Dendritic cell treated with granulocyte-macrophage colony-stimulating factor and Interleukin-4, amounts not matched to agents 40 ng/mL and 50 ng/mL, for 4 days (primary cell): ENCODE measurements at regions of chr4 and their contacts with region 1.

Region 1: GRCh38 chr4:70749313-70749712 is 27.5 kb downstream of the RUFY3 start:
- H3K4me3 Mint-ChIP-seq: no peak overlapping the region
- H3K27ac Mint-ChIP-seq: no peak overlapping the region
- H3K4me1 Mint-ChIP-seq: peaks cover 39% of the 10 kb centered on the region
- H3K27me3 Mint-ChIP-seq: no peaks in the 10 kb centered on the region

Region 2: GRCh38 chr4:70714079-70714887 is 35.0 kb before region 1 on chr4:
- intact Hi-C with region 1: loop called (anchors 5 kb)
- H3K4me3 Mint-ChIP-seq: no peak overlapping the region
- H3K27ac Mint-ChIP-seq: peak overlapping the region; percentile 84
- H3K4me1 Mint-ChIP-seq: peaks cover 55% of the 10 kb centered on the region
- H3K27me3 Mint-ChIP-seq: no peaks in the 10 kb centered on the region

Region 3: DNA sequence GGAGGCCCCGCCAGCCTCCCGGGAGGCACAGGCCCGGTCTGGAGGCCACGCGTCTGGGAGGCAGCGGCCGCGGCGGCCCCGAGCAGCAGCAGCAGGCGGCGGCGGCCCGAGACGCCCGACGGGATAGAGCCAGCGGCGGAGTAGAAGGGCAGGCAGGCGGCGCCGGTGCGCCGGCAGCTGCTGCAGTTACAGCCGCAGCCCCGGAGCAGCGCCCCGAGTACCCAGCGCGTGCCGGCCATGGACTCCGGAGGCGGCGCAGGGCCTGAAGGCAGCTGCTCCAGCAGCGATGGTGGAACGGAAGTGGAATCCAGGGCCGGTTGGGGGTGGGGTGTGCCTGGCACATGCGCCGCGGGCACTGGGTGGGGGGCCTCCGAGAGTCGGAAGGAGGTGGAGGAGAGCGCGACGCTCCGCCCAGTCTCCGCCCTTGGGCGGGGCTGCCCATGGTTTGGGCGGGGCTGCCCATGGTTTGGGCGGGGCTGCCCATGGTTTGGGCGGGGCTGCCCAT is 90.3 kb after region 1 on chr4 and contains the start of gene GRSF1:
- intact Hi-C with region 1: no loop called
- H3K4me3 Mint-ChIP-seq: peak within 1 kb of the TSS; percentile 87
- H3K27ac Mint-ChIP-seq: peak within 1 kb of the TSS; percentile 94
- H3K4me1 Mint-ChIP-seq: peaks cover 15% of the 10 kb centered on the region
- H3K27me3 Mint-ChIP-seq: no peaks in the 10 kb centered on the region

Region 4: DNA sequence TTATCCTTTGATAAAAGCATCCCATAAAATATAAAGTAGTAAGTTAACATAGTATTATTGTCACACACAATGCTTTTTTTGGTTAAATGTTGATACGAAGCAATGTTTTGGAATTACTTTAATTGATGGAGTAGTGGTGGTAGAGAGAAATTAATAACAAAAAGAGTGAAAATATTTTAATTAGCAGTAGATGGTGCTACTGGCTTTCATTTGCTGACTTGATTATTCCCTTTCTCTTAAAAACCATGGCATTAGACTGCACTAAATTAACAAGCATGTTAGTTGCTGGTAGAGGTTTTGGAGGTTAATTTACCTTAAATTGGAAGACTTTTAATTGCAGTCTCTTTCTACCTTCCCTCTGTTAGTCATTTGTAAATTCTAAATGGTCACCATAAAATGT is 235.3 kb after region 1 on chr4:
- intact Hi-C with region 1: no loop called
- H3K4me3 Mint-ChIP-seq: no peak overlapping the region
- H3K27ac Mint-ChIP-seq: no peak overlapping the region
- H3K4me1 Mint-ChIP-seq: peaks cover 7% of the 10 kb centered on the region
- H3K27me3 Mint-ChIP-seq: no peaks in the 10 kb centered on the region